ENCODE measurements at regions of chr12 and their contacts with region 1.

Region 1: DNA sequence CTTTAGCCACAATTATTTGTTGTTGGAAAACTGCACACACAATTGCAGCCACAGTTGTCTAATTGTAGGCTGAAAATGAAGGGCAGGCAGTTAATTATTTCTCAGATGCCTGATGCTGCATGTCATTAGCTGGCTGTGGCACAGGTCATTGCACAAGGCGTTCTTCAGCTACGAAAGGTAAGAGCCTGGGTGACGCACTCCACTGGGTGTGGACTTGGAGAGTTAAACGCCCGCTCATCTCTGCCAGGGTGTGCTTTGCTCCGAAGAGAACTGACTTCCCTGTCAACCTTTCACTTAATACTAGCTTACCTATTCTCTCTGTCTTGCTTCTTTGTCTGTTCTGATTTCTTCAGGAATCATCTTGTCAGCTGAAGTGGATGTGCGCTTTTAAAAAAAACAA is 91.4 kb upstream of the CPM start:
- DNase-seq: peak; percentile 96
- H3K4me3 Mint-ChIP-seq: peak overlapping the region; percentile 61
- H3K27ac Mint-ChIP-seq: peak overlapping the region; percentile 88
- H3K4me1 Mint-ChIP-seq: peaks cover 35% of the 10 kb centered on the region
- H3K27me3 Mint-ChIP-seq: no peaks in the 10 kb centered on the region
- CTCF ChIP-seq: no peak

Region 2: DNA sequence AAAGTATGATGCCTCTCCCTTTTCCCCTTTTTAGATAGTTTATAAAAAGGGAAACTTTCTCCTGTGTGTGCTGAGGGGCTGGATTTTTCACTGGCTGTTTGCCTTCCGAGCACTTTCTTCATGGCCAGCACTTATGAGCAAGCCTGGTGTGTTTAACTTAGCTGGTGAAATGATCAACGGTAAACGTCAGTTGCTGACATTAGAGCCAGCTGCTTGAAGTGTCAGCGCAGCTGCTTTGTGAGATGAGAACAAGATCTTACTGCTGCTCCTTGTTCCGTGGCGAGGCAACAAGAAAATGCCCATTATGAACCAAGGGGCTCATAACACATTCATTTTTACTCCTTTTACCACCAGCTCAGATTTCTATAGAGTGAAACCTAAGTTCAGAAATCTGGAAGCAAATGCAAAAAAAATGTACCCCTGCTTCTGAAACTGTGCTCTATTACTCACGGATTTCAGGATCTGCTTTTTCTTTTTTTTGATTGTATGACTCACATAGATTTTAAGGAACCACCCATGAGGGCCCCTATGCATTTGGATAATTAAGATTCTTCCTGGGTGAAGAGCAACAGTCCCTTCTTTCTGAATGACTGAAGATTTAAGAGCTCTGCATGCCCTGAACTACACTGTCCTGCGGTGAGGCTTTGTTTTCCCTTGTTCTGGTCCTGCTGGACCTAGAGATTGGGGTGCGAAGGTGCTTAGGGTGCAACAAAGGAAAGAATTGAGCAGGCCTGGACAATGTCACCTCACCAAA is 17.1 kb before region 1 on chr12:
- CTCF ChIA-PET with region 1: interaction called, 7 read pairs
- POLR2A ChIA-PET with region 1: interaction called, 62 read pairs
- intact Hi-C with region 1: no loop called
- DNase-seq: peak; percentile 53
- H3K4me3 Mint-ChIP-seq: peak overlapping the region; percentile 39
- H3K27ac Mint-ChIP-seq: peak overlapping the region; percentile 82
- H3K4me1 Mint-ChIP-seq: peaks cover 24% of the 10 kb centered on the region
- H3K27me3 Mint-ChIP-seq: no peaks in the 10 kb centered on the region
- CTCF ChIP-seq: no peak

Region 3: GRCh38 chr12:69052613-69053408 is 28.4 kb after region 1 on chr12:
- CTCF ChIA-PET with region 1: interaction called, 3 read pairs
- POLR2A ChIA-PET with region 1: interaction called, 15 read pairs
- intact Hi-C with region 1: loop called (anchors 2 kb)
- DNase-seq: peak; percentile 74
- H3K4me3 Mint-ChIP-seq: no peak overlapping the region
- H3K27ac Mint-ChIP-seq: peak overlapping the region; percentile 73
- H3K4me1 Mint-ChIP-seq: peaks cover 13% of the 10 kb centered on the region
- H3K27me3 Mint-ChIP-seq: no peaks in the 10 kb centered on the region
- CTCF ChIP-seq: no peak

Region 4: GRCh38 chr12:69059483-69060457 is 35.4 kb after region 1 on chr12:
- CTCF ChIA-PET with region 1: interaction called, 3 read pairs
- POLR2A ChIA-PET with region 1: interaction called, 15 read pairs
- intact Hi-C with region 1: no loop called
- DNase-seq: peak; percentile 93
- H3K4me3 Mint-ChIP-seq: no peak overlapping the region
- H3K27ac Mint-ChIP-seq: peak overlapping the region; percentile 14
- H3K4me1 Mint-ChIP-seq: peaks cover 15% of the 10 kb centered on the region
- H3K27me3 Mint-ChIP-seq: no peaks in the 10 kb centered on the region
- CTCF ChIP-seq: no peak